Activated T-helper 1 cell treated with anti-CD3 and anti-CD28 coated beads, Interleukin-12 subunit alpha, Interleukin-12 subunit beta, Interleukin-2, Interleukin-4 antibody, amounts not matched to agents 30 ng/mL and 10 ng/mL and 1 ng/mL, durations not matched to agents 14 hours and 24 hours and 36 hours (primary cell): ENCODE measurements at regions of chr19 and their contacts with region 1.

Region 1: DNA sequence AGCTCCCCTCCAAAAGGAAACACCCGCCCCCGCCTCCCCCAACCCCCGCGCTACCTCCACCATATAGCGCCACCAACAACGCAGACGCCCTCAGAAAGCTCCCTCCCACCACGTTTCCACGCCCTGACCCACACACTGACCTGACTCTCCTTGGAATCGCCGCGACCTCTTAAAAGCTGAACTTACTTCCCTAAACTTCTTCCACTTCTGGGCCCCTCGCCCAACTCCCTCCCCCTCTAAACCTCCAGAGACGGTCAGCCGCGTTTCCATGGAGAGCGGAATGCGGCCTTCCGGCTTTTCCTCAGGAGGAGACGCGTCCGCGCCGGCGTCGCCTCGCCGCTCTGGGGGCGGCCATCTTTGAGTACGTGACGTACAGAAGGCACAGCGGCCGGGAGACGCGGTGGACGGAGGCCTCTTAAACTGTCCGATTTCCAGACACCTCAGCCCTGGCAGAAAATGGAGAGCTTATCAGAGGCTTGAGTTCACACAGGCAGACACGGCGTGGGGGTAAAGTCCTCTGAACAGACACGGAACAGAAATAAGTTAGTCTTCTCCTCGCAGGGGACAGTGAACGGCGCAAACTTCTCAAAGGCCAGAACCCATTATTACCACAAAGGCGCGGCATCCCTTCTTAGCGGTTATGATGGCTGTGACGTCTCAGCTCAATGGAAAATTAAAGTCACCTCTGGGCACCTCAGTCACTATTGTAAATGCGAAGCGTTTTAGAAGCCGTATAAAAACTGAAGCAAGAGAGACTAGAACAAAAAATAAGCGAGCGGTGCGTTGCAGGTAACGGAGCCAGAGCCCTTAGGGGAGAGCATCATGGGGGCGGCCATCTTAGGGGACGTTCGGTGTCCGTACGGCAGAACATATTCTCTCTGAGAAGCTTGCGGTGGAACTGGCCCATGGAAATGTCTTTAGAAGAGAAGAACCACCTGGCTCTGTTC is at the start of gene ZNF432:
- DNase-seq: peak; percentile 76
- H3K4me3 Mint-ChIP-seq: peak within 1 kb of the TSS; percentile 95
- H3K27ac Mint-ChIP-seq: peak within 1 kb of the TSS; percentile 99
- H3K4me1 Mint-ChIP-seq: peaks cover 20% of the 10 kb centered on the region
- H3K27me3 Mint-ChIP-seq: no peaks in the 10 kb centered on the region
- total RNA-seq, gene ZNF432: 12.5 and 15.0 TPM in 2 replicates

Region 2: DNA sequence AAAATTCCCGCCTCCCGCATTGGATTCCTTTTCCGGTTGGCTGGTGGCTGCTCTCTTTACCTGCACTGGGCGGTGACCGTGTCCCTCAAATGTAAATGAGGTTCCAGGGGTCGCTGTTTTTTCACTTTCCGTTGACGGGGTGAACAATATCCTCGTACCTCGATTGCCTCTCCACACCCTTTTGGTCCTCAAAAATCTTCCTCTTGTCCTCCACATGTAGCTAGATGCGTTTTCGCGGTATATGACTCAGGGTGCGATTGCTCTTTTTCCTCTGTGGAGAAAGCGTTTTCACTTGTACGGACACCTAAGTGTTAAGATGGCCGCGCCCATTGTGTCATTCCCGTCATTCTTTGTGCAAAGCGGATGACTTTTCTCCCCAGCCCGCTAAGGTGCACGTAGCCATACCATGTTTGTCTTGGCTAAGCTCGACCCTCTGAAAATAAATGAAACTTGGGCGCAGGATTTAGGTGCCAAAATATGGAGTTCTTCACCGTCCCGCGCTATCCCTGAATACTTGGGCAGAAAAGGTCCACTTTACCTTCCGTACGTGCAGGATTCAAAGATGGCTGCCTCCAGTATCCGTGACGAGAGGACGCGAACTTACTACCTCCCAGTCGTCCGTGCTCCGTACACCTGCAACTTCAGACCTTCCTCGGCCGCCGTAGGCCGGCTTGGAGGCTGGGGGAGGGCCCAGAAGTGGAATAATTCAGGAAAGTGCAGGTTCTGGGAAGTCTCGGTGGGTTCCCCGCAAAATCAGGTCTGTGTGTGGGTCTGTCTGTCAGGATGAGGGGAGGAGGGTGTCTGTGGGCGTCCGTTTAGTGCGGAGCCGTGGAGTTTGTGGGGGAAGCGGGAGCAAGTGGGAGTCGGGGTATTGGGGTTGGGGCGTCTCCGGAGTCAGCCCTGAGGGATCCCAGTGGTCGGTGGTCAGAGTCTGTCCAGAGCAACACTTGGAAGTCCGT is 121.8 kb before region 1 on chr19 and contains the start of gene ZNF613:
- intact Hi-C with region 1: loop called (anchors 2 kb)
- DNase-seq: peak; percentile 73
- H3K4me3 Mint-ChIP-seq: peak within 1 kb of the TSS; percentile 99
- H3K27ac Mint-ChIP-seq: peak within 1 kb of the TSS; percentile 94
- H3K4me1 Mint-ChIP-seq: peaks cover 23% of the 10 kb centered on the region
- H3K27me3 Mint-ChIP-seq: no peaks in the 10 kb centered on the region
- total RNA-seq, gene ZNF613: 3.1 and 3.8 TPM in 2 replicates

Region 3: DNA sequence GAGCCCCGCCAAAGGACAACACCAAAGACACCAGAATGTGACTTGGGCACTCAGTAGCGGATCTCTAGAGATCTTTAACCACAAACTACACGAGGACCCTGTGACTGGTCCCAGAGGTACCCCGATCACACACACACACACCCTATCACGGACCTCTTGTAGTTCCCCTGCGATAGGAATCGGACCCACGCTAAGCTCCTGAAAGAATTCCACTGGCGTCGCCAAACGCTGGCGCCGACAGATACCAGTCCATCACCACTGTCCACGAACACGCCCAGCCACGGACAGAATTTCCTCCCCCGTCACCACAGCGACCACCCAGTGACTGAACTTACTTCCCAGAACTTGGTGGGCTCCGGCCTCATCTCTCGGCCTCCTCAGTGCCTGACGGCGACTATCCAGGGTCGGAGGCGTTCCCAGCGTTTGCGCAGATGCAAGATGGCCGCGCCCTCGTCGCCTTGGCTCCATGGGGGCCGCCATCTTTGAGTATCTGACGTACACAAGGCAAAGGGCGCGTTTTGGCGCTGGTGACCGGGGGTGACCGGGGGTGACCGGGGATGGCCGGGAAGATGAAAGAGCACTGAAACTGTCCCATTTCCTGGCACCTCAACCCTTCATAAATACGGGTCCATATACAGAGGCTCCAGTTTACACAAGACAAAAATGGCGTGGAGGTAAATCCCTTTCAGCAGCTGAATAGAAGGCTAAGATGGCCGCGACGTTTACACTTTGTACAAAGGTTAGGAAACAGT is 40.8 kb before region 1 on chr19 and contains the start of gene ZNF615:
- intact Hi-C with region 1: loop called (anchors 1 kb)
- DNase-seq: peak; percentile 80
- H3K4me3 Mint-ChIP-seq: peak within 1 kb of the TSS; percentile 94
- H3K27ac Mint-ChIP-seq: peak within 1 kb of the TSS; percentile 94
- H3K4me1 Mint-ChIP-seq: peaks cover 20% of the 10 kb centered on the region
- H3K27me3 Mint-ChIP-seq: no peaks in the 10 kb centered on the region
- total RNA-seq, gene ZNF615: 6.4 and 6.9 TPM in 2 replicates

Region 4: GRCh38 chr19:52139252-52140031 is 90.6 kb after region 1 on chr19 and contains the start of gene ZNF616:
- intact Hi-C with region 1: loop called (anchors 2 kb)
- DNase-seq: peak; percentile 94
- H3K4me3 Mint-ChIP-seq: peak within 1 kb of the TSS; percentile 98
- H3K27ac Mint-ChIP-seq: peak within 1 kb of the TSS; percentile 94
- H3K4me1 Mint-ChIP-seq: peaks cover 23% of the 10 kb centered on the region
- H3K27me3 Mint-ChIP-seq: no peaks in the 10 kb centered on the region
- total RNA-seq, gene ZNF616: 4.1 and 6.7 TPM in 2 replicates

Region 5: GRCh38 chr19:52189735-52190486 is 141.1 kb after region 1 on chr19 and contains the start of gene PPP2R1A:
- intact Hi-C with region 1: loop called (anchors 1 kb)
- DNase-seq: peak; percentile 97
- H3K4me3 Mint-ChIP-seq: peak within 1 kb of the TSS; percentile 98
- H3K27ac Mint-ChIP-seq: peak within 1 kb of the TSS; percentile 99
- H3K4me1 Mint-ChIP-seq: peaks cover 45% of the 10 kb centered on the region
- H3K27me3 Mint-ChIP-seq: no peaks in the 10 kb centered on the region
- total RNA-seq, gene PPP2R1A: 214 and 215 TPM in 2 replicates